IMR-90 (cell line): ENCODE measurements at regions of chr15 and their contacts with region 1.

Region 1: GRCh38 chr15:100694381-100695021 is 92.1 kb downstream of the ASB7 start:
- DNase-seq: peak; percentile 62
- ATAC-seq: peak; percentile 65
- H3K4me3 ChIP-seq: no peak overlapping the region
- H3K27ac ChIP-seq: 0 out of 2 replicates have a peak overlapping the region, but pooled peaks have one; percentile 4
- H3K4me1 ChIP-seq: peaks cover 7% of the 10 kb centered on the region
- H3K27me3 ChIP-seq: no peaks in the 10 kb centered on the region
- CTCF ChIP-seq: no peak
- POLR2A ChIP-seq: no peak
- RAD21 ChIP-seq: no peak

Region 2: DNA sequence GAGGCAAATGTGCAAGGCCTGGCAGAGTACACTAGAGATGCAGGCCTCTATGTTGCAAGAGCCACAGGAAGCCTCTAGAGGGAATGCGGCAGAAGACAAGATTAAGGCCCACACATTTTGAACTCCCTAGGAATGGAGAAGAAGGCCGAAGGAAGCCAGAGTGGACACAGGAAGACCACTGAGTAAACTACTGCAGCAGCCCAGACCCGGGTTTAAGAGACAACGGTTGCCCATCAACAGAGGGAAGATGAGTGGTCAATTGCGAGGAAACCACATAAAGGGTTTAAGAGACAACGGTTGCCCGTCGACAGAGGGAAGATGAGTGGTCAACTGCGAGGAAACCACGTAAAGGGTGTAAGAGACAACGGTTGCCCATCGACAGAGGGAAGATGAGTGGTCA is 542.8 kb after region 1 on chr15:
- CTCF ChIA-PET with region 1: no interaction called
- POLR2A ChIA-PET with region 1: interaction called, 17 read pairs
- dilution Hi-C with region 1: no loop called
- in situ Hi-C with region 1: no loop called
- intact Hi-C with region 1: no loop called
- DNase-seq: no peak
- ATAC-seq: no peak
- H3K4me3 ChIP-seq: no peak overlapping the region
- H3K27ac ChIP-seq: peak overlapping the region; percentile 45; the same call in 1 of the 2 replicates
- H3K4me1 ChIP-seq: peaks cover 14% of the 10 kb centered on the region
- H3K27me3 ChIP-seq: no peaks in the 10 kb centered on the region
- CTCF ChIP-seq: no peak
- POLR2A ChIP-seq: no peak
- RAD21 ChIP-seq: no peak